PC-9 (cell line): ENCODE measurements at regions of chr12 and their contacts with region 1.

Region 1: GRCh38 chr12:52278541-52279421 is 4.3 kb downstream of the KRT86 start:
- DNase-seq: peak; percentile 83 to 86
- H3K4me3 ChIP-seq: peak overlapping the region; percentile 78
- H3K27ac ChIP-seq: peak overlapping the region; percentile 100
- H3K4me1 ChIP-seq: peaks cover 60% of the 10 kb centered on the region
- H3K27me3 ChIP-seq: no peaks in the 10 kb centered on the region
- CTCF ChIP-seq: peak; percentile 95

Region 2: GRCh38 chr12:52192173-52192791 is 86.5 kb before region 1 on chr12:
- CTCF ChIA-PET with region 1: no interaction called
- POLR2A ChIA-PET with region 1: interaction called, 19 read pairs
- intact Hi-C with region 1: loop called (anchors 1 kb)
- DNase-seq: peak; percentile 90 to 98
- H3K4me3 ChIP-seq: peak overlapping the region; percentile 92
- H3K27ac ChIP-seq: peak overlapping the region; percentile 77
- H3K4me1 ChIP-seq: peaks cover 75% of the 10 kb centered on the region
- H3K27me3 ChIP-seq: no peaks in the 10 kb centered on the region
- CTCF ChIP-seq: no peak

Region 3: GRCh38 chr12:52235822-52236692 is 42.7 kb before region 1 on chr12:
- CTCF ChIA-PET with region 1: interaction called, 3 read pairs
- POLR2A ChIA-PET with region 1: interaction called, 10 read pairs
- intact Hi-C with region 1: loop called (anchors 1 kb)
- DNase-seq: peak; percentile 56 to 87
- H3K4me3 ChIP-seq: peak overlapping the region; percentile 96
- H3K27ac ChIP-seq: peak overlapping the region; percentile 97
- H3K4me1 ChIP-seq: peaks cover 70% of the 10 kb centered on the region
- H3K27me3 ChIP-seq: no peaks in the 10 kb centered on the region
- CTCF ChIP-seq: no peak

Region 4: DNA sequence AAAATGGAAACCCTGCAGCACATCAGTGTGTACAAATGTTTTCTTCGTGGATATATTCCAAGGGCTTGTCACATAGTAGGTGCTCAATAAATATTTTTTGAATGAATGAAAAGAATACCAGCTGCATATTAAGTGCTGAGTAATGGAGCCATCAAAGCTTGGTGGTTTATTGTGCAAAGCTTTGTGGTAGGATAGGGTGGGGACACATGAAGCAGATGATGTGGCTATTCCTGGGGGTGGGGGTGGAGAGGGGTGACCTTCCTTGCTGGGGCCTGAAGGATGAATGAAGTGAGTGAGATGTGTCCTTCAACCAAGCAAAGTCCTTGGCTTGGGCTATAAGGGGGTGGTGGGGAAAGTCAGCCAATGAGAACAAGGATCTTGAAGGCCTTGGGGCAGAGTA is 16.9 kb after region 1 on chr12:
- CTCF ChIA-PET with region 1: interaction called, 11 read pairs
- POLR2A ChIA-PET with region 1: interaction called, 5 read pairs
- intact Hi-C with region 1: no loop called
- DNase-seq: no peak
- H3K4me3 ChIP-seq: no peak overlapping the region
- H3K27ac ChIP-seq: no peak overlapping the region
- H3K4me1 ChIP-seq: 0 out of 2 replicates have a peak, but pooled peaks cover 4% of the 10 kb centered on the region
- H3K27me3 ChIP-seq: no peaks in the 10 kb centered on the region
- CTCF ChIP-seq: no peak

Region 5: DNA sequence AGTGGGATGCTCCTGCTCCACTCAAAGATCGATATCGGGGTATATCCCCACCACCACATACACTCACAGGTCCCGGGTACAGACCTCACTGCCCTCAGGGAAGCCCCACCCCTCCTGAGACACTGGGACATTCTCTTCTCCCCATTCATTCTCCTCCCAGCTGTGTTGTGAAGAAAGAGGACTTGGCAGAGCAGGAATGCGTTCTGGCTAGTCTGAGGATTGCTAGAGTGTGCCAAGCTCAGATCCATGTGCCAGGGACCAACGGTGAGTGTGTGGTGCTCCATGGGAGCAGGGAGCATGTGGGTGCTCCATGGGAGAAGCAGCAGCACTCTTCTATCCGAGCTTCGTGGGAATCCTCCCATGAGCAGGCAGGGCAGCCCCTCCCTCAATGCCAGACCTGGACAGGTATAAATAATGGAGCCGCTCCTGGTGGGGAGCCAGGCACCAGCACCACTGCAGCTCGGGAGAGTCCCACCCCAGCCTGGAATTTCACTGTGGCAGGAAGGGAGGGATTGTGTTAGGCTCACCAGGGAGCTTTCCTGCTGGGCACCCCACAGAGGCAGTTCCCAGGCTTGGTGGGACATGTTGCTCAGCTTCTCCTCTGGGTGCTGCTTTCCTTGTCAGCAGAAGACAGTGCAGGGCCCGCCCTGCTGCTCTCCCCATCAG is 243.7 kb after region 1 on chr12:
- CTCF ChIA-PET with region 1: no interaction called
- POLR2A ChIA-PET with region 1: interaction called, 3 read pairs
- intact Hi-C with region 1: loop called (anchors 1 kb)
- DNase-seq: peak; percentile 78 to 87
- H3K4me3 ChIP-seq: peak overlapping the region; percentile 31; the same call in 1 of the 2 replicates
- H3K27ac ChIP-seq: peak overlapping the region; percentile 96
- H3K4me1 ChIP-seq: peaks cover 66% of the 10 kb centered on the region
- H3K27me3 ChIP-seq: no peaks in the 10 kb centered on the region
- CTCF ChIP-seq: no peak

Region 6: GRCh38 chr12:52969828-52970569 is 691.2 kb after region 1 on chr12:
- CTCF ChIA-PET with region 1: no interaction called
- POLR2A ChIA-PET with region 1: no interaction called
- intact Hi-C with region 1: loop called (anchors 5 kb)
- DNase-seq: peak; percentile 90 to 98
- H3K4me3 ChIP-seq: peak overlapping the region; percentile 28; the same call in 1 of the 2 replicates
- H3K27ac ChIP-seq: peak overlapping the region; percentile 99
- H3K4me1 ChIP-seq: peaks cover 67% of the 10 kb centered on the region
- H3K27me3 ChIP-seq: no peaks in the 10 kb centered on the region
- CTCF ChIP-seq: no peak